ENCODE measurements at regions of chr10 and their contacts with region 1.

Region 1: GRCh38 chr10:43292755-43293676 is 26.2 kb upstream of the RASGEF1A start:
- DNase-seq: peak; percentile 48 to 63 (median 59)
- H3K4me3 ChIP-seq: no peak overlapping the region
- H3K27ac ChIP-seq: no peak overlapping the region
- H3K4me1 ChIP-seq: no peaks in the 10 kb centered on the region
- H3K27me3 ChIP-seq: no peaks in the 10 kb centered on the region
- CTCF ChIP-seq: peak; percentile 39 to 69 (median 60)
- EP300 ChIP-seq: no peak
- POLR2A ChIP-seq: no peak

Region 2: DNA sequence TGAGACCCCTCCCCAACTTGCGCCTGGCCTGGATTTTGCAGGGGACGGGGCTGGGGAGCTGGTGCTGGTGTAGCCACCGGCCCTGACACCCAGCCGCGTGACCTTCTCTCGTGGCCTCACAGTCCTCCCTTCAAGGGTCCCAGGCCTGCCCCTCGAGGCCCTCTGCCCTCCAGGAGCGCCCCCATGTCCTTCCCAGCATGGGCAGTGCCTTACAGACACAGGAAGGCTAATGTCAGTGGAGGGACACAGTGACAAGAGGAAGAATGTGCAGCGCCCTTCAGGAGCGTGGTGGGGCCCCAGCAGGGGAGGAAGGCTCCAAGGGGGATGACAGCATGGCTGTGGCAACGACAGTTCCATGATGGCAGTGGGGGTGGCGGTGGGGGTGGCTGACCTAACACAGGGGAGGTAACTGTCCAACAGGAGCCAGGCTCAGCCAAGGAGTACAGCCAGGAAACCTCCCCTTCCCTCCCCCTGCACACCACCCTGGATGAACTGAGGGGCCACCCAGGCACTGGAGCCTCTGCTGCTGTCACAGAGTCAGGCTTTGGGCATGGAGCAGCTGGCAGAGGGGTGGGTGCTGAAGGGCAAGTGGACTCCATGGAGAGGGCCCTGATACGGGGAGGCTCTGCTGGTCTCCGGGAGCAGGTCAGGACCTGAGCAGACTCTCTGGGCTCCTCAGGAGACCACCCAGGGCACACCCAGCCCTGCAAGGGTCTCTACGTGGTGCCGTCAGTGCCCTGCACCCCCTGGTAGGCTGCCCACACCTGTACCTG is 292.2 kb before region 1 on chr10:
- intact Hi-C with region 1: no loop called
- DNase-seq: peak in 1 of 5 donors; percentile 14
- H3K4me3 ChIP-seq: no peak overlapping the region
- H3K27ac ChIP-seq: no peak overlapping the region
- H3K4me1 ChIP-seq: no peaks in the 10 kb centered on the region
- H3K27me3 ChIP-seq: no peaks in the 10 kb centered on the region
- CTCF ChIP-seq: no peak
- EP300 ChIP-seq: no peak
- POLR2A ChIP-seq: no peak

Region 3: GRCh38 chr10:43340619-43341018 is 47.6 kb after region 1 on chr10:
- intact Hi-C with region 1: loop called in 2 of 4 experiments (anchors 5 to 10 kb)
- DNase-seq: no peak
- H3K4me3 ChIP-seq: no peak overlapping the region
- H3K27ac ChIP-seq: no peak overlapping the region
- H3K4me1 ChIP-seq: no peaks in the 10 kb centered on the region
- H3K27me3 ChIP-seq: no peaks in the 10 kb centered on the region
- CTCF ChIP-seq: no peak
- EP300 ChIP-seq: no peak
- POLR2A ChIP-seq: no peak

Region 4: DNA sequence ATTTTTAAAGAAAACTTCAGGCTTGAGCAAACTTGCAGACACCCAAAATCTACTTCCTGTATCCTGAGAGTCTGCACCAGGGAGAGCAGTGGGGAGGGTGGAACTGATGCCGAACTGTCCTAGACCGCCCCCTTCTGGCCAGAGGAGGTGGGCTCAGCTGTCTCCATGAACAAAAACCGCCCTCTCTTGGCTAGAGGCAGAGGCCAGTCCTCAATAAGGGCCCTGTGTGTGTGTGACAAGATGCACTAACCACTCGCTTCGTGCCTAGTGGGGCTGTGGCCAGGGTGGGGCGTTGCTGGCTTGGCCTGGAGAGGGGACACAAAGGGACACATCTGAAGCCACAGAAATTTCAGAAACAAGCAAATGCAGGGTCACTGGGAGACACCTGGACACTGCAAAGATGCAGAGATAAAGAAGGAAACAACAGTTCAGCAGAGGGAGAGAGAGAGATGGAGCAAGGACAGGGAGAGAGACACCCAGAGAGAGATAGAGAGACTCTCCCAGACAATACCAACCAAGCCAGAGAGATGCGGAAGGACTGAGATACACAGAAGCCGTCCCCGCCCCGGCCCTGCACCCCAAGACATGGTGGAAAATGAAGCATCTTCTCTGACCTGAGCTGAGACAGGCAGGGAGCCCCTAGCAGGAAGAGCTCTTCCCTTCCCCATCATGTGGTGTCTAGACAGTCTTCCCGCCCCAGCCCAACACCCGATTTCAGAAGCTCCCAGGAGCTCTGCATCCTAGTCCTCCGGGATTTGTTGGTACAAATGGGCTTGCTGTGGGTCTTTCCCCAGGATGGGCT is 55.7 kb after region 1 on chr10:
- intact Hi-C with region 1: loop called in 2 of 4 experiments (anchors 5 to 10 kb)
- DNase-seq: peak; percentile 54 to 83 (median 74)
- H3K4me3 ChIP-seq: no peak overlapping the region
- H3K27ac ChIP-seq: no peak overlapping the region
- H3K4me1 ChIP-seq: no peaks in the 10 kb centered on the region
- H3K27me3 ChIP-seq: no peaks in the 10 kb centered on the region
- CTCF ChIP-seq: peak; percentile 26 to 54 (median 48)
- EP300 ChIP-seq: no peak
- POLR2A ChIP-seq: no peak

Region 5: GRCh38 chr10:43461950-43462349 is 168.9 kb after region 1 on chr10:
- intact Hi-C with region 1: loop called (anchors 5 kb)
- DNase-seq: no peak
- H3K4me3 ChIP-seq: no peak overlapping the region
- H3K27ac ChIP-seq: no peak overlapping the region
- H3K4me1 ChIP-seq: no peaks in the 10 kb centered on the region
- H3K27me3 ChIP-seq: no peaks in the 10 kb centered on the region
- CTCF ChIP-seq: peak; percentile 54 to 74 (median 58)
- EP300 ChIP-seq: no peak
- POLR2A ChIP-seq: no peak

Region 6: GRCh38 chr10:44281089-44281613 is 988.1 kb after region 1 on chr10:
- intact Hi-C with region 1: no loop called
- DNase-seq: peak in 3 of 5 donors; percentile 37 to 52 (median 45)
- H3K4me3 ChIP-seq: no peak overlapping the region
- H3K27ac ChIP-seq: no peak overlapping the region
- H3K4me1 ChIP-seq: peaks cover 1% of the 10 kb centered on the region
- H3K27me3 ChIP-seq: no peaks in the 10 kb centered on the region
- CTCF ChIP-seq: no peak
- EP300 ChIP-seq: no peak
- POLR2A ChIP-seq: no peak

Measured in ovary (tissue), 10 donors.